Posterior cingulate gyrus (tissue), 11 donors: ENCODE measurements at regions of chr12 and their contacts with region 1.

Region 1: DNA sequence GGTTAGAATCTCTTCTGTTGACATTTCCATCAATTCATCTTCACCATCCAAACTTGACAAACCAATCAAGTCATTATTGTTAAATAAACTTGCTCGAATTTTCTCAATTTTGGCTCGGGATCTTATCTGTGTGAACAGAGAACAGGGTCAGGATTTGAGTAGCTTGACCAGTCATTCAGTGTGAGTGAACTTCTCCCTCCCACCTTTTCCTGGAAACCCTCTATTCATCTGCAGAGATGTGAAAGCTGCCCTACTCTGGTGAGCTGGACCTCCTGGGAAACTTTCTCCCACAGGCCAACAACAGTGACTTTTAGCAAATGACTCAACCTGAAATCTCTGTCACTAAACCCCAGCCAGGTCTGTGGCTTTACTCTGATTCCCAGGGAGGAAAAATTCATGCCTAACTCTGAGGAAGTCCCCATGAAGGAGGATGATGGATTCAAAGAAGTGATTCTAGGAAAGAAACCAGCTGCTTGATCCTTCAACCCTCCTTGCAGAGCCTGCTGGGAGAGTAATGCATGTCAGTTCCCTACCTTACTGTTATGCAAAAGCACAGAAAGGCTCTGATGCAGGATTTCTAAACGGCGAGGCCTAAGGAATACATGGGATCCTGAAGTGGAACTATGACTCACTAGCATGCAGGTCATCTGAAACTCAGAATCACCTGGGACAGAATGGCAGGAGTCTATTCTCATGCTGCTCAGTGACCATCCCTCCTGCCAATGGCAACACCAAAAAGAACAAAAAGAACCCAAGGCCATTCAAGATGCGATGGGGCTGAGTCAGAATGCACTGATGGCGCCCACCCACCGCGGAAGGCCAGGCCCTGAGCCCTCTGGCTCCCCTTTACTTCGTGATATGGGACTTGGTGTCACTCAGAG is 58.0 kb downstream of the TRAFD1 start:
- DNase-seq: no peak

Region 2: DNA sequence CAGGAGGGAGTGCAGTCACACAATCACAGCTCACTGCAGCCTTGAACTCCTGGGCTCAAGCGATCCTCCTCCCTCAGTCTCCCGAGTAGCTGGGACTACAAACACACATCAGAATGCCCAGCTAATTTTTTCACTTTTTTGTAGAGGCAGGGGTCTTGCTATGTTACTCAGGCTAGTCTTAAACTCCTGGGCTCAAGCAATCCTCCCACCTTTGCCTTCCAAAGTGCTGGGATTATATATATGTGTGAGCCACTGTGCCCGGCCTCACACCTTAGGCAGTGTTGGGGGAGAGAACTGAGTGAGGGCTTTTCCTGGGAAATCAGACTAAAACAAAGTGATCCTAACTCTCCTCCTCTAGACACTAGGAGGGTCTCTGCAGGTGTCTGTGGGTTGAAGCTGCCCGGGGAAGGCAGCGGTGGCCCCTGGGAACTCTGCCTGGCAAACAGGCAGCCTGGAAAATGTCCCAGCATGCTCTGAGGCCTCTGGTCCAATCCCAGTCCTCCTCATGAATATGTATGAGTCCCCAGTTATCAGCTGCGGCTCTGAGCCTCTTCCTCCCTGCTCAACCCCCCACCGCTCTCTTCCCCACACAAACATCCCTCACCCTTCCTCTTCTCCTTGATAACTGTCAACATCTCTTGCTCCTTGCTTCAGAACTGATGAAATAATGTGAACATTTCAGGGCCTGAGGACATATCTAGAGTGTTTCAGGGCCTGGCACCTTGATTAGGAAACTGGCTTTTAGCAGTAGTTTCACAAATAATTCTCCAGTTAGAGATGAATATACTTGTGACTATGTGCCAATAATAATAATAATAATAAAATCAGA is 66.9 kb before region 1 on chr12:
- intact Hi-C with region 1: loop called (anchors 5 kb)
- DNase-seq: peak; percentile 69 to 97 (median 80)